Left cardiac atrium (tissue), 4 donors: ENCODE measurements at regions of chr4 and their contacts with region 1.

Region 1: DNA sequence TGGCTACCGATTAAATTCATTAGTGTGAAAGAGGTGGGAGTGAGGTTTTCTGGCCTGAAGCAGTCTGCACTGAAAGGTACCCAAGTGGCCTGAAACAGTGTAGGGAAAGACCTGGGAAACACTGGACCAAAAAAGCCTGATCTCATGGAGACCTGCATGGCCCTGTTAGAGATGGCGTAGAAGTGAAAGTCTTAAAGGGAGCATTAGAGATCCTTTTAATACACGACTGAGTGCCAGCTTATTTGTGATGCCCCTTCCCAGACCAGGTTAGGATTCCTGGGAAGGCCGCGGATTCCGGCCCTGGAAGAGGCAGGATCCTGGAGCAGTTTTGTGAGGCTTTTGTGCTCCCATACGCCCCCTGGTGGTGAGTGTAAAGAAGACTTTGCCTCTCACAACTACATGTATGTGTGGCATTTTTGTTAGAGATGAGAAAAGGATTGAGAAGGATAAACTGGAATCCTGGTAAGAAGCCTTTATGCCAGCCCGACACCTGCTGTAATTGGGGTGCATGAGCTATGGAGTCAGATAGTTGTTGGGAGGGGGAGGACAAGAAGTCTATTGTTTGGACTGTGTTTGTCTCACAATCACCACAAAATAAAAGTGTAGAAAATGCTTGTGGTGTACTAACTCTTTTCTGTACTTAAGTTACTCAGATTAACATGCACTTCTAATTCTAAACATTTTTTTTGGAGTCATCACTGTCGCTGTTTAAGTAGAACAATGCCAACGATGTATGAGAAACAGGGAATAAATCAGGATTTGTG is 54.0 kb downstream of the JADE1 start:
- DNase-seq: peak; percentile 78
- ATAC-seq: peak; percentile 63 to 65

Region 2: GRCh38 chr4:128191115-128191781 is 672.2 kb before region 1 on chr4:
- intact Hi-C with region 1: loop called (anchors 5 to 10 kb)
- DNase-seq: peak; percentile 60
- ATAC-seq: peak; percentile 86 to 92

Region 3: GRCh38 chr4:128565565-128566186 is 297.8 kb before region 1 on chr4:
- intact Hi-C with region 1: loop called (anchors 5 to 10 kb)
- DNase-seq: peak; percentile 48
- ATAC-seq: peak; percentile 79 to 81

Region 4: GRCh38 chr4:128635141-128635954 is 228.1 kb before region 1 on chr4:
- intact Hi-C with region 1: no loop called
- DNase-seq: peak; percentile 94
- ATAC-seq: peak; percentile 87 to 94

Region 5: DNA sequence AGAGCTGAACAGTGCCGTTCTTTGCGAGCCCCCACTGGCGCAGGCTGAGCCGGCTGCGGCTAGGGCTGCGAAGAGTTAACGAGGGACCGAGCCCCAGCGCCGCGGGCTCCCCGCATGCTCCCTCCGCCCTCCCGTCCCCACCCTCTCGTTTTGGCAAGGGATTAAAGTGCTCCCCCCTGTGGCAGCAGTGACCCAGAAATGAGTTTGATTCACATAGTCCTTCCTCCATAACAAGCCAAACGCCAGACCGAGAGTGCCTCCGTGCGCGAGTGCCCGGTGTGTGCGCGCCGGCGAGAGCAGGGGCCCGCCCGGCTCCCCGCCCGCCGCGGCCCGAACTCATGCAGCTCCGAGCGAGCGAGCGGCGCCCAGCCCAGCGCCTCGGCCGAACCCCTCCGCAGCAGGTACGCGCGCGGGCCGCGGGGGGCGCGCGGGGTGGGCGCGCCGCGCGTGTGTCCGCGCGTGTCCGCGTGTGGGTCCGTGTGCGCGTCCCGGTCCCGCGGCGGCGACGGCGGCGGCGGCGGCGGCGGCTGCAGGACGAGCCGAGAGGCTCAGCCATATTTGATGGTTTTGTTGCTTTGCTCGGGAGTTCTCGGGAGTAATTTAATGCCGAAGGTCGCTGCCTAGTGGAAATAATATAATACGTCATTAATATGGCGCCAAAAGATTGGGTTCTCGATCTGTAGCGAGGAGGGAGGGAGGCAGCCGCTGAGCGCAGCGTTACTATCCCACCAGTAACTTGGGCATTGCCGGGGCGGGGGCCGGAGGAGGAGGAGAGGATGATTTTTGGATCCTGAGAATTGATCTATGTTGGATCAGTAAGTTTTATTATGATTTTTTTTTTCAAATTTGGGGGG is 53.8 kb before region 1 on chr4 and contains the start of gene JADE1:
- intact Hi-C with region 1: loop called in 1 of 2 experiments (anchors 5 kb)
- DNase-seq: peak; percentile 92
- ATAC-seq: peak; percentile 72 to 76
- total RNA-seq, gene JADE1: 22.7 to 32.3 TPM